ENCODE measurements at regions of chr10 and their contacts with region 1.

Region 1: DNA sequence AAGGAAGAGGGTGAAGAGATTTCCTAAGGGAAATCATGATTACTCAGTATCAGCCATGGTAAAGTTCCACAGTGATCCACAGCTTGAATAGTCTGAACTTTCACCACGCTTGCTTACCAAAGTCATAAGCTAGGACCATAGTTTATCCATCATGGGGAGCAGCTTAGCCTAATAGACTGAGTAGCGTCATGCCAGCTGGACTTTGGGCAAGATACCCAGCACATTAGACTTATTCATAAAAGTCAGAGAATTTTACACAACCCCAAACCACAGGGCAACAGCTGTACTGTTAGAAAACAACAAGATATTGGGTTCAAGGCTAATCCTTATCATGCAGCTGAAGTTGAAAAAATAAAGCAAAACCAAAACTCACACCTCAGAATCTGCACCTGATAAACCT is 491.0 kb downstream of the XPNPEP1 start:
- DNase-seq: no peak
- H3K4me3 ChIP-seq: no peak overlapping the region
- H3K27ac ChIP-seq: no peak overlapping the region
- H3K4me1 ChIP-seq: peaks cover 0 to 21% (median 9%) of the 10 kb centered on the region in 4 donors
- H3K27me3 ChIP-seq: no peaks in the 10 kb centered on the region
- CTCF ChIP-seq: no peak
- EP300 ChIP-seq: no peak
- POLR2A ChIP-seq: no peak

Region 2: GRCh38 chr10:109418795-109419194 is 13.5 kb before region 1 on chr10:
- intact Hi-C with region 1: loop called (anchors 1 kb)
- DNase-seq: no peak
- H3K4me3 ChIP-seq: no peak overlapping the region
- H3K27ac ChIP-seq: no peak overlapping the region
- H3K4me1 ChIP-seq: peaks cover 0 to 5% (median 2%) of the 10 kb centered on the region in 4 donors
- H3K27me3 ChIP-seq: no peaks in the 10 kb centered on the region
- CTCF ChIP-seq: no peak
- EP300 ChIP-seq: no peak
- POLR2A ChIP-seq: no peak

Measured in sigmoid colon (tissue), 7 donors.